ENCODE measurements at regions of chrX and their contacts with region 1.

Region 1: DNA sequence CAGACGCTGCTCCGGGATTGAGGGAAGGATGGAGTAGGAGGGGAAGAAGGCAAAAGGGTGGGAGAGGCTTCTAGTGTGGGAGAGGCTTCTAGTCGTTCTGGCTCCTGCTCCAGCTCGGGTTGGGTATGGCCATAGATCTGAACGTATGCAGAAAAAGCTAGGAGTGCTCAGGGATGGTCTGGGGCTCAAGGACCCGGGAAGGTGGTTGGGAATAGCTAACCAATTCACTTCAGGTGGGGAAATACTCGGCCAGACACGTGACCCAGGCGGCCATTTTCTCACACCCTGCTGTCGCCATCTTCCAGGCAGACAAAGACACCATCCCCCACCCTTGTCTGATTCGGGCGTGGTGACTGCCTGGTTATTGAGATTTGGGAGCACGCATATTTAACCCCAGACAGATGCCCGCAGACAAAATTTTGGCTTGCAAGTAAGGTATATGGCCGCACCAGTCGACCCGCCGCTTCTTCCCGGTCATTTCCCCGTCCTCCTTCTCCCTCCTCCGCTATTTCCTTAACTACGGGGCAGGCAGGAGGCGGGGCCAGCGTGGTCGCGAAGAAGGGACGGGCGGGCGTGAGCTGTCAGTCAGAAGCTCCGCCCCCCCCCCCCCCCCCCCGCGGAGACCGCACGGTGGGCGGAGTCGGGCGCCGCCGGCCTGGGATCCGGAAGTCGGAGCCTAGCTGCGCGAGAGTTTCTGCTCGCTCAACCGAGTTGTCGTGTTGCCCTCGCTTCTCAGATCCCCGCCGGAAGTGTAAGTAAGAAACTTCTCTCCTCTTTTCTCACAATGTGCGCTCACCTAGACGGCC is at the start of gene GNL3L:
- DNase-seq: peak; percentile 70 to 92
- ATAC-seq: peak; percentile 95 to 96
- H3K4me3 ChIP-seq: peak within 1 kb of the TSS; percentile 92
- H3K27ac ChIP-seq: peak within 1 kb of the TSS; percentile 96 to 99
- H3K4me1 ChIP-seq: peaks cover 19% of the 10 kb centered on the region; the same call in 2 of the 3 replicates
- CTCF ChIP-seq: no peak
- EP300 ChIP-seq: no peak
- POLR2A ChIP-seq: peak; percentile 61; the same call in 1 of the 2 replicates
- RAD21 ChIP-seq: no peak
- polyA plus RNA-seq, gene GNL3L: 51.0 and 51.9 TPM in 2 replicates

Region 2: GRCh38 chrX:54495814-54496516 is 33.8 kb before region 1 on chrX and contains the start of gene FGD1:
- CTCF ChIA-PET with region 1: no interaction called
- POLR2A ChIA-PET with region 1: interaction called, 10 read pairs
- DNase-seq: peak; percentile 64 to 82
- ATAC-seq: peak; percentile 82 to 86
- H3K4me3 ChIP-seq: peak within 1 kb of the TSS; percentile 88
- H3K27ac ChIP-seq: peak within 1 kb of the TSS; percentile 92 to 95
- H3K4me1 ChIP-seq: peaks cover 22% of the 10 kb centered on the region
- CTCF ChIP-seq: no peak
- EP300 ChIP-seq: no peak
- POLR2A ChIP-seq: no peak; the same call in 1 of the 2 replicates
- RAD21 ChIP-seq: no peak
- polyA plus RNA-seq, gene FGD1: 1.9 and 2.9 TPM in 2 replicates

Measured in A549 (cell line).